Mammary epithelial cell (primary cell): ENCODE measurements at regions of chr16 and their contacts with region 1.

Region 1: DNA sequence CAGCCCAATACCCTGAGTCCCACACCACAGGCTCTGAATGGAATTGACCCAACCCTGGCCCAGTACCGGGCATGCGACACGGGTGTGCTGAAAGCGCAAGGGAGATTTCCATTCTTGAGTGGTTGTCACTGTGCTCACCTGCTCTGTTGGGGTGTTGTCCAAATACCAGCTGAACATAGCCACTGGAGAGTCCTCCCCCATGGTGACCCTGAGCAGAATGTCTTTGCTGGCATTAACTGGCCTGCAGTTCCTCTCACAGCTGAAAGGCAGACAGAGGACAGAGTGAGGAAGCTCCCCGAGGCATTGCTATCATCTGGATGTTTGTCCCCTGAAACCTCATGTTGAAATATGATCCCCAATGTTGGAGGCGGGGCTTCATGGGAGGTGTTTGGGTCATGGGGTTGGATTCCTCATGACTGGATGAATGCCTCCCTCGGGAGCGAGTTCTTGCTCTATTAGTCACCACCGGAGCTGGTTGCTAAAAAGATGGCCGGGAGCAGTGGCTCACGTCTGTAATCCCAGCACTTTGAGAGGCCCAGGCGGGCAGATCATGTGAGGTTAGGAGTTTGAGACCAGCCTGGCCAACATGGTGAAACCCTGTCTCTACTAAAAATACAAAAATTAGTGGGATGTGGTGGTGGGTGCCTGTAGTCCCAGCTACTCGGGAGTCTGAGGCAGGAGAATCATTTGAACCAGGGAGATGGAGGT is 57.3 kb upstream of the BCO1 start:
- DNase-seq: peak; percentile 95
- H3K4me3 ChIP-seq: no peak overlapping the region
- H3K27ac ChIP-seq: peak overlapping the region; percentile 40
- H3K4me1 ChIP-seq: peaks cover 8% of the 10 kb centered on the region
- H3K27me3 ChIP-seq: no peaks in the 10 kb centered on the region
- CTCF ChIP-seq: no peak

Region 2: DNA sequence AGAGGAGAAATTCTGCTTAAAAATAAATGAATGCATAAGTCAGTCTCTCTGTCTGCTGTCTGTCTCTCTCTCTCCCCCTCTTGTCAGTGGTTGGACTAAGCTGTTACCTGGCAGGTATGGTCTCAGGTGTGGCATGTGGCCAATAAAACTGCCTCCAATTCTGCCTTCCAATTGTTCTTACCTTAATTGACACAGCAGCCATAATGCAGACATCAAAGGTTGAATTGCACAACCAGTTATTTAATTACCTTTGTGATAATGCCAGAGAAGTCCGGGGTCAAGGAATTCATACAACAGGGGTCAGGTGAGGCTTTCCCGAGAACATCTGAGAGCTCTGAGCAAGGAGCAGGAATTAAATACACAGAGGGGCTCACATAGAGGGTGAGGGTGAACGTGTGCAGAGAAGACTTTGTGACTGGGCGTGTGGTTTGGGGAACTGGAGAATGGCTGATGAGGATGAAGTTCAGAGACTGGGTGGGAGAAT is 298.0 kb before region 1 on chr16:
- CTCF ChIA-PET with region 1: no interaction called
- dilution Hi-C with region 1: no loop called
- in situ Hi-C with region 1: no loop called
- intact Hi-C with region 1: no loop called
- DNase-seq: no peak
- H3K4me3 ChIP-seq: no peak overlapping the region
- H3K27ac ChIP-seq: no peak overlapping the region
- H3K4me1 ChIP-seq: no peaks in the 10 kb centered on the region
- H3K27me3 ChIP-seq: no peaks in the 10 kb centered on the region
- CTCF ChIP-seq: no peak

Region 3: GRCh38 chr16:81095953-81096717 is 85.0 kb before region 1 on chr16 and contains the start of gene GCSH:
- CTCF ChIA-PET with region 1: interaction called, 4 read pairs
- dilution Hi-C with region 1: no loop called
- in situ Hi-C with region 1: no loop called
- intact Hi-C with region 1: loop called (anchors 2 kb)
- DNase-seq: peak; percentile 99
- H3K4me3 ChIP-seq: peak within 1 kb of the TSS; percentile 85 to 95 (median 92)
- H3K27ac ChIP-seq: peak within 1 kb of the TSS; percentile 74
- H3K4me1 ChIP-seq: peaks cover 7% of the 10 kb centered on the region
- H3K27me3 ChIP-seq: no peaks in the 10 kb centered on the region
- CTCF ChIP-seq: no peak
- total RNA-seq, gene GCSH: 27.5 to 41.9 TPM

Region 4: DNA sequence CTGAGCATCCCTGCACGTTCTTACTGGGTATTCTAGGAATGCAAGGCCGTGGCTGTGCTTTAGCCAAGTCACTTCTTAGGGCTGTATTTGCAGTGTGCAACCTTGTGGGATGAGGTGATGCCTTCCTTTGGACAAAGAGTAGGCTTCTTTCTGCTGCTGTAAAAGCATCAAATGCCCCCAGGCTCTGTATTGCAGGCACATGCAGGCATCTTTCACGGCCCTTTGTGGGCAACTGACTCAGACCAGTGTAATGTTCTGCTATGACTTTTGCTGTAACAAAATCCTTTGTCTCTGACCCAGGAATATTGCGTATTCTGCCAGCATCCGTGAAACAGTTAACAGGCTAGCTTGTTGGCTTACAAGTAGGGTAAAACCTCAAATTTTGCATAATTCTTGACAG is 54.1 kb before region 1 on chr16:
- CTCF ChIA-PET with region 1: no interaction called
- dilution Hi-C with region 1: no loop called
- in situ Hi-C with region 1: no loop called
- intact Hi-C with region 1: loop called (anchors 1 kb)
- DNase-seq: peak; percentile 97
- H3K4me3 ChIP-seq: no peak overlapping the region
- H3K27ac ChIP-seq: no peak overlapping the region
- H3K4me1 ChIP-seq: peaks cover 13% of the 10 kb centered on the region
- H3K27me3 ChIP-seq: no peaks in the 10 kb centered on the region
- CTCF ChIP-seq: no peak